ENCODE measurements at regions of chr1 and their contacts with region 1.

Region 1: DNA sequence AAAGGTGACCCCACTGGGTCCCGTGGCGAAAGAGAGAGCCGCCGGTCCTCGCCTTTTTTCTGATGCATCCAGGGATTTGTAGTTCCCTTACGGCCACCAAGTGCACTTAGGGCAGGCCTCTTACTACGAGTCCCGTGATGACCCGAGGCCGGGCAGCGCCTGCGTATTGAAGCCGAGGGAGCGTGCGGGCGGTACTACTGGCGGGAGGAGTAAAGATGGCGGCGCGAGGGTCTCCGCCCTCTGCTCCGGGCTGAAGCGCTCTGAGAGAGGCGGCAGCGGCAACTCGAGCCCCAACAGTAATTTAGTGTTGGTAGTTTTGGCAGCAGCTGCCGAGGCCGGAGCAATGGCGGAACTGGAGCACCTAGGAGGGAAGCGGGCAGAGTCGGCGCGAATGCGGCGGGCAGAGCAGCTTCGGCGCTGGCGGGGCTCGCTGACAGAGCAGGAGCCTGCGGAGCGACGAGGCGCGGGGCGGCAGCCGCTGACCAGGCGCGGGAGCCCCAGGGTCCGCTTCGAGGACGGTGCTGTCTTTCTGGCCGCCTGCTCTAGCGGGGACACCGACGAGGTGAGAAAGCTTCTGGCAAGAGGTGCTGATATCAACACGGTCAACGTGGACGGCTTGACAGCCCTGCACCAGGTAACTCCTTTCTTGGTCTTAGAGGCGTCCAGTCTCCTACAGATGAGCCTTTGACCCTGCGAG is at the start of gene PPP1R12B:
- DNase-seq: peak; percentile 98
- H3K4me3 ChIP-seq: peak within 1 kb of the TSS; percentile 86
- H3K27ac ChIP-seq: peak within 1 kb of the TSS; percentile 22
- H3K4me1 ChIP-seq: peaks cover 19% of the 10 kb centered on the region
- CTCF ChIP-seq: no peak
- total RNA-seq, gene PPP1R12B: 19.1 and 37.1 TPM in 2 replicates

Region 2: DNA sequence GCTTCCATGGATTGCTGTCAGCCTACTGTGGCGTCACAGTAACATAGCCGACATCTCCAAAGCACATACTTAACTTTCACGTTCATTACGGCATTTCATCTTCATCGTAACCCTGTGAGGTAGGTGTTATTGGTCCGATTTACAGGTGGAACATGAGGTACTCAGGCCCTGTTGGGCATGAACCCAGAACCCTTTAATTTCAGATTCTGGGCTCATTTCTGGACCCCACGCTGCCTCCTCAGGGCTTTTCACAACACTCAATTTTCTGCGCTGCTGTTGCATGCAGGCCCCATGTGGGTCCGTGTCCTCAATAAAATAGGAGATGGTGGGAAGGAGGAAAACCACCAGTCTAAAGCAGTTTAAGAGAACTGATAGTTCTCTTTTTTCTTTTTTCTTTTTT is 46.5 kb before region 1 on chr1:
- CTCF ChIA-PET with region 1: no interaction called
- POLR2A ChIA-PET with region 1: no interaction called
- intact Hi-C with region 1: no loop called
- DNase-seq: no peak
- H3K4me3 ChIP-seq: no peak overlapping the region
- H3K27ac ChIP-seq: no peak overlapping the region
- H3K4me1 ChIP-seq: no peaks in the 10 kb centered on the region
- CTCF ChIP-seq: no peak

Region 3: GRCh38 chr1:202405928-202406327 is 57.3 kb after region 1 on chr1:
- CTCF ChIA-PET with region 1: no interaction called
- POLR2A ChIA-PET with region 1: no interaction called
- intact Hi-C with region 1: no loop called
- DNase-seq: no peak
- H3K4me3 ChIP-seq: no peak overlapping the region
- H3K27ac ChIP-seq: no peak overlapping the region
- H3K4me1 ChIP-seq: no peaks in the 10 kb centered on the region
- CTCF ChIP-seq: no peak

Region 4: GRCh38 chr1:202571347-202572339 is 223.0 kb after region 1 on chr1:
- CTCF ChIA-PET with region 1: no interaction called
- POLR2A ChIA-PET with region 1: interaction called, 3 read pairs
- intact Hi-C with region 1: loop called (anchors 1 kb)
- DNase-seq: peak; percentile 59
- H3K4me3 ChIP-seq: no peak overlapping the region
- H3K27ac ChIP-seq: no peak overlapping the region
- H3K4me1 ChIP-seq: peaks cover 1% of the 10 kb centered on the region
- CTCF ChIP-seq: peak; percentile 95

Region 5: GRCh38 chr1:202615501-202616354 is 267.1 kb after region 1 on chr1:
- CTCF ChIA-PET with region 1: no interaction called
- POLR2A ChIA-PET with region 1: no interaction called
- intact Hi-C with region 1: loop called (anchors 5 kb)
- DNase-seq: peak; percentile 73
- H3K4me3 ChIP-seq: peak overlapping the region; percentile 28
- H3K27ac ChIP-seq: no peak overlapping the region
- H3K4me1 ChIP-seq: peaks cover 22% of the 10 kb centered on the region
- CTCF ChIP-seq: no peak

Region 6: DNA sequence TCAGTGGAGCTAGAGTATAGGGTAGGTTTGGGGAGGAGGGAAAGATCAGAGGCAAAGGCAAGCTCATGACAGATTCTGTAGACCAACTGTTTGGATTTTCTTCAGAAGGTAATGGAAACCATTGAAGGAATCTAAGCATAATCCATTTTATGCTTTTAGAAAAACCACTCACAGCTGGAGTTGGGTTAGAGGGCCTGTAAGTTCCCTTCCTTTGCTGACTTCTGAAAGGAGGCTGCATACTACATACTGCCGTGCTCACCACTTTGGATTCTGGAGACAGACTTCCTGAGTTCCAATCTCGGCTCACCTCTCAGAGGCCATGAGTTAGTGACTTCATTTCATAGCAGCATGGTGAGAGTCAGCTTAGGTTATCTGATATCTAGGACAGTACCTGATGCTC is 368.0 kb after region 1 on chr1:
- CTCF ChIA-PET with region 1: no interaction called
- POLR2A ChIA-PET with region 1: no interaction called
- intact Hi-C with region 1: loop called (anchors 5 kb)
- DNase-seq: no peak
- H3K4me3 ChIP-seq: no peak overlapping the region
- H3K27ac ChIP-seq: no peak overlapping the region
- H3K4me1 ChIP-seq: no peaks in the 10 kb centered on the region
- CTCF ChIP-seq: no peak

Region 7: GRCh38 chr1:203006948-203007871 is 658.6 kb after region 1 on chr1 and contains the start of gene TMEM183A:
- CTCF ChIA-PET with region 1: no interaction called
- POLR2A ChIA-PET with region 1: no interaction called
- intact Hi-C with region 1: loop called (anchors 10 kb)
- DNase-seq: peak; percentile 99
- H3K4me3 ChIP-seq: peak within 1 kb of the TSS; percentile 84
- H3K27ac ChIP-seq: peak within 1 kb of the TSS; percentile 54
- H3K4me1 ChIP-seq: peaks cover 17% of the 10 kb centered on the region
- CTCF ChIP-seq: no peak
- total RNA-seq, gene TMEM183A: 92.4 and 99.3 TPM in 2 replicates